GM12878 (cell line): ENCODE measurements at regions of chr19 and their contacts with region 1.

Region 1: DNA sequence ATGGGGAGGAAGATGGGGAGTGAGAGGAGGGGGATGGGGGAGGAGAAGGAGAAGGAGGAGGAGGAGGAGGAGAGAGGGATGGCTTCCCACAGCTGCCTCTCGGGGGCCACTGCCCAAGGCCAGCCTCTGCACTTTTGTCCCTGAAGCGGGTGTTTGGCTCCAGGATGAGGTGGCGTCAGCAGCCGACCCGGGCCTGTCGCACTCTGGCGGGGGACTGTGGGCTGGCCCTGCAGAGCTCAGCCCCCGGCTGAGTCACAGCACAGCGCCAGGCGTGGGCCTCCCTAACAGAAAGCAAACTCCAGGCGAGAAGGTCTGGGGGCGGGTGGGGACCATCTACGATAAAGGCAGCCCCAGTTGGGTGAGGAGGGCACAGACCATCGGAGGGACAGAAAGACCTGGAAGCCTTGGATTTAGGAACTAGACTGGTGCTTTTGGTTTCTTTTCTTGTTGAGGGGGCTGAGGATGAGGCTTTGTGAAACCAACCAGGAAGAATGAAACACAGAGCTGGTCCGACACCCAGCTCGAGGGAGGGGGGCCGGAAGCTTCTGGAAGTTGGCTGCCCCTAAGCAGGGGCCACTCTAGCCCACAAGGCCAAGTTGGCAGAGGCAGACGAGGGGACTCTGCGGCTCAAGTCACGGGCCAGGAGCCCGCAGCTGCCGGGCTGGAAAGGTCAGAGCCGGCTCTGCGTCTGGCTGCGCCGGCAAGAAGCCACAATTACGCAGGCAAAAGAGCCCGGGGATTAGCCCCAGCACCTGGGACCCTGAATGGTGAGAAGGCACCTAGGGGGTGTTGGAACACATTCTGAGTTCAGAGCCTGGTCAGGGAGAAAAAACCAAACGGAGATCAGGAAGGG is 18.2 kb downstream of the LSM4 start:
- DNase-seq: no peak
- ATAC-seq: peak; percentile 79
- H3K4me3 ChIP-seq: peak overlapping the region; percentile 89
- H3K27ac ChIP-seq: peak overlapping the region; percentile 97
- H3K4me1 ChIP-seq: peaks cover 22% of the 10 kb centered on the region
- H3K27me3 ChIP-seq: no peaks in the 10 kb centered on the region
- CTCF ChIP-seq: no peak
- EP300 ChIP-seq: no peak; a peak in 2 of 4 replicates
- POLR2A ChIP-seq: peak; percentile 82
- RAD21 ChIP-seq: no peak

Region 2: DNA sequence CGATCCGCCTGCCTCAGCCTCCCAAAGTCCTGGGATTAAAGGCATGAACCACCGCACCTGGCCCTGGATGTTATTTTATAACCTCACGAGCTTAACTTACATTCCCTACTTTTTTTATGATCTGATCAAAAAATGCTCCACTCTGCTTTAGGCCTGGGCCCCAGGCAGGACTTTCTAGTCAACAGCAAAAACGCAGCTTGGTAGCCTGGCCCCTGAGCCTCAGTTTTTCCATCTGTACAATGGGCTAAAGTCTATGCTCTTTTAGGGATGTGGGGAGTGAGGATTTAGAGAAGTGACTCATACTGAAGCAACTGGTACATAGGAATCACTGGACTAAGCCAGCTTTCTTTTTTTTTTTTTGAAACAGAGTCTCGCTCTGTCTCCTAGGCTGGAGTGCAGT is 163.7 kb before region 1 on chr19:
- CTCF ChIA-PET with region 1: no interaction called
- POLR2A ChIA-PET with region 1: no interaction called
- RAD21 ChIA-PET with region 1: no interaction called
- SMC1A ChIA-PET with region 1: no interaction called
- in situ Hi-C with region 1: no loop called
- intact Hi-C with region 1: no loop called
- DNase-seq: no peak
- ATAC-seq: no peak
- H3K4me3 ChIP-seq: no peak overlapping the region
- H3K27ac ChIP-seq: no peak overlapping the region
- H3K4me1 ChIP-seq: no peaks in the 10 kb centered on the region
- H3K27me3 ChIP-seq: no peaks in the 10 kb centered on the region
- CTCF ChIP-seq: no peak
- EP300 ChIP-seq: no peak
- POLR2A ChIP-seq: no peak
- RAD21 ChIP-seq: no peak

Region 3: GRCh38 chr19:18291590-18292461 is 12.9 kb before region 1 on chr19:
- CTCF ChIA-PET with region 1: interaction called, 18 read pairs
- POLR2A ChIA-PET with region 1: interaction called, 128 read pairs
- RAD21 ChIA-PET with region 1: interaction called, 25 read pairs
- SMC1A ChIA-PET with region 1: interaction called, 14 read pairs
- in situ Hi-C with region 1: no loop called
- intact Hi-C with region 1: loop called (anchors 1 kb)
- DNase-seq: no peak
- ATAC-seq: peak; percentile 69
- H3K4me3 ChIP-seq: peak overlapping the region; percentile 96
- H3K27ac ChIP-seq: peak overlapping the region; percentile 96
- H3K4me1 ChIP-seq: peaks cover 32% of the 10 kb centered on the region
- H3K27me3 ChIP-seq: no peaks in the 10 kb centered on the region; a peak in 1 of 4 replicates
- CTCF ChIP-seq: no peak
- EP300 ChIP-seq: peak; percentile 75 to 83; a peak in 3 of 4 replicates
- POLR2A ChIP-seq: peak; percentile 72
- RAD21 ChIP-seq: no peak; the same call in 1 of the 2 replicates

Region 4: GRCh38 chr19:18349524-18350128 is 44.9 kb after region 1 on chr19:
- CTCF ChIA-PET with region 1: no interaction called
- POLR2A ChIA-PET with region 1: no interaction called
- RAD21 ChIA-PET with region 1: no interaction called
- SMC1A ChIA-PET with region 1: no interaction called
- in situ Hi-C with region 1: no loop called
- intact Hi-C with region 1: no loop called
- DNase-seq: no peak
- ATAC-seq: peak; percentile 80
- H3K4me3 ChIP-seq: no peak overlapping the region
- H3K27ac ChIP-seq: no peak overlapping the region
- H3K4me1 ChIP-seq: no peaks in the 10 kb centered on the region
- H3K27me3 ChIP-seq: no peaks in the 10 kb centered on the region
- CTCF ChIP-seq: peak; percentile 74 to 93 (median 80)
- EP300 ChIP-seq: no peak
- POLR2A ChIP-seq: no peak
- RAD21 ChIP-seq: peak; percentile 88